Activated CD8-positive, alpha-beta T cell treated with anti-CD3 and anti-CD28 coated beads for 36 hours (primary cell): ENCODE measurements at regions of chr3 and their contacts with region 1.

Region 1: GRCh38 chr3:63993653-63994079 is 29.6 kb downstream of the PSMD6 start:
- DNase-seq: peak; percentile 60
- ATAC-seq: peak; percentile 96
- H3K4me3 Mint-ChIP-seq: no peak overlapping the region
- H3K27ac Mint-ChIP-seq: peak overlapping the region; percentile 59
- H3K4me1 Mint-ChIP-seq: peaks cover 29% of the 10 kb centered on the region
- H3K27me3 Mint-ChIP-seq: no peaks in the 10 kb centered on the region
- CTCF ChIP-seq: peak; percentile 78

Region 2: GRCh38 chr3:63655519-63655918 is 338.1 kb before region 1 on chr3:
- CTCF ChIA-PET with region 1: no interaction called
- POLR2A ChIA-PET with region 1: no interaction called
- intact Hi-C with region 1: no loop called
- DNase-seq: no peak
- ATAC-seq: no peak
- H3K4me3 Mint-ChIP-seq: no peak overlapping the region
- H3K27ac Mint-ChIP-seq: no peak overlapping the region
- H3K4me1 Mint-ChIP-seq: no peaks in the 10 kb centered on the region
- H3K27me3 Mint-ChIP-seq: no peaks in the 10 kb centered on the region
- CTCF ChIP-seq: no peak

Region 3: GRCh38 chr3:63961891-63962290 is 31.8 kb before region 1 on chr3:
- CTCF ChIA-PET with region 1: interaction called, 595 read pairs
- POLR2A ChIA-PET with region 1: interaction called, 5 read pairs
- intact Hi-C with region 1: loop called (anchors 1 kb)
- DNase-seq: no peak
- ATAC-seq: peak; percentile 85
- H3K4me3 Mint-ChIP-seq: no peak overlapping the region
- H3K27ac Mint-ChIP-seq: no peak overlapping the region
- H3K4me1 Mint-ChIP-seq: peaks cover 49% of the 10 kb centered on the region
- H3K27me3 Mint-ChIP-seq: no peaks in the 10 kb centered on the region
- CTCF ChIP-seq: peak; percentile 79

Region 4: GRCh38 chr3:64011685-64012084 is 18.0 kb after region 1 on chr3:
- CTCF ChIA-PET with region 1: interaction called, 21 read pairs
- POLR2A ChIA-PET with region 1: interaction called, 4 read pairs
- intact Hi-C with region 1: no loop called
- DNase-seq: peak; percentile 9
- ATAC-seq: peak; percentile 53
- H3K4me3 Mint-ChIP-seq: no peak overlapping the region
- H3K27ac Mint-ChIP-seq: peak overlapping the region; percentile 55
- H3K4me1 Mint-ChIP-seq: peaks cover 45% of the 10 kb centered on the region
- H3K27me3 Mint-ChIP-seq: no peaks in the 10 kb centered on the region
- CTCF ChIP-seq: no peak